Activated B cell treated with CpG ODN at 0.5 μM for 24 hours (primary cell): ENCODE measurements at regions of chr3 and their contacts with region 1.

Region 1: GRCh38 chr3:15098503-15099363 is at the start of gene RBSN:
- DNase-seq: peak; percentile 89
- ATAC-seq: peak; percentile 79
- H3K4me3 Mint-ChIP-seq: peak within 1 kb of the TSS; percentile 96
- H3K27ac Mint-ChIP-seq: peak within 1 kb of the TSS; percentile 89
- H3K4me1 Mint-ChIP-seq: peaks cover 27% of the 10 kb centered on the region
- H3K27me3 Mint-ChIP-seq: peaks cover 7% of the 10 kb centered on the region
- CTCF ChIP-seq: no peak
- total RNA-seq, gene RBSN: 19.8 and 29.0 TPM in 2 replicates

Region 2: DNA sequence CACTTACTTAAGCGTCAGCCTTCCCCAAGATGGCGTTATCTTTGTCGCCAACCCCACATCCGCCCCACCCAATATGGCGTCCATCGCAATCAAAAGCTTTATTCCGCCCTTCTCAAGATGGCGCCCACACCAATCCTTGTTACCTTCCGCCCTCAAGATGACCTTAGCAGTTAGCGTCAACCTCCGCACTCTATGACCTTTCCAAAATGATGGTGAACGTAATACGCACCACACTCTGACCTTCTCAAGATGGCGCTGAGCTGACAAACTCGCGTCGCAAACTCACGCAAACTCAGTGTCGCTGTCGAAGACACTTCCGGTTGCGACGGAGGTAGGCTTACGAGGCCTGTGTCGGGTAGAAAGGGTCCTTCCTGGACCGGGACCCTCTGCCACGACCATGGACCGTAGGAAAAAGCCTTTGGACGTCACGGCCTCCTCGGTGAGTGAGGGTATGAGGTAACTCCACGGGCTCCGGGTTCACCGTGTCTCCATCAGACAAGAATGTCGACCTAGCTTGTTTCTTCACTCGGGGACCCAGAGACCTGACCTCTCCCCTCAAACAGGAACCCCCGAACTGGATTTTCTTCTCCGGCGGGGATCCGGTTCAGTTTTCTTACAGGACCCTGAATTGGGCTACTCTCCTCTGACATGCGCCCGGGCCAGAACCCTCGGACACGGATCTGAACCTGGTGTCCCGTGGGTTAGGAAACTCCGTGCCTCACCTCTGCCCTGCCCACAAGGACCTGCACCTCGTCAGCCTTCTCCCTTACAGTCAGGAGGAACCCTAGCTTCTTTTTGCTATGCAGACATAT is 447.1 kb before region 1 on chr3 and contains the start of gene CCDC174:
- CTCF ChIA-PET with region 1: no interaction called
- POLR2A ChIA-PET with region 1: interaction called, 6 read pairs
- intact Hi-C with region 1: loop called (anchors 1 kb)
- DNase-seq: peak; percentile 86
- ATAC-seq: peak; percentile 97
- H3K4me3 Mint-ChIP-seq: peak within 1 kb of the TSS; percentile 95
- H3K27ac Mint-ChIP-seq: peak within 1 kb of the TSS; percentile 93
- H3K4me1 Mint-ChIP-seq: peaks cover 34% of the 10 kb centered on the region
- H3K27me3 Mint-ChIP-seq: no peaks in the 10 kb centered on the region
- CTCF ChIP-seq: no peak
- total RNA-seq, gene CCDC174: 30.2 and 32.4 TPM in 2 replicates

Region 3: GRCh38 chr3:15051531-15051930 is 47.2 kb before region 1 on chr3:
- CTCF ChIA-PET with region 1: no interaction called
- POLR2A ChIA-PET with region 1: interaction called, 19 read pairs
- intact Hi-C with region 1: loop called (anchors 1 kb)
- DNase-seq: no peak
- ATAC-seq: peak; percentile 20
- H3K4me3 Mint-ChIP-seq: no peak overlapping the region
- H3K27ac Mint-ChIP-seq: peak overlapping the region; percentile 84
- H3K4me1 Mint-ChIP-seq: peaks cover 68% of the 10 kb centered on the region
- H3K27me3 Mint-ChIP-seq: no peaks in the 10 kb centered on the region
- CTCF ChIP-seq: no peak

Region 4: DNA sequence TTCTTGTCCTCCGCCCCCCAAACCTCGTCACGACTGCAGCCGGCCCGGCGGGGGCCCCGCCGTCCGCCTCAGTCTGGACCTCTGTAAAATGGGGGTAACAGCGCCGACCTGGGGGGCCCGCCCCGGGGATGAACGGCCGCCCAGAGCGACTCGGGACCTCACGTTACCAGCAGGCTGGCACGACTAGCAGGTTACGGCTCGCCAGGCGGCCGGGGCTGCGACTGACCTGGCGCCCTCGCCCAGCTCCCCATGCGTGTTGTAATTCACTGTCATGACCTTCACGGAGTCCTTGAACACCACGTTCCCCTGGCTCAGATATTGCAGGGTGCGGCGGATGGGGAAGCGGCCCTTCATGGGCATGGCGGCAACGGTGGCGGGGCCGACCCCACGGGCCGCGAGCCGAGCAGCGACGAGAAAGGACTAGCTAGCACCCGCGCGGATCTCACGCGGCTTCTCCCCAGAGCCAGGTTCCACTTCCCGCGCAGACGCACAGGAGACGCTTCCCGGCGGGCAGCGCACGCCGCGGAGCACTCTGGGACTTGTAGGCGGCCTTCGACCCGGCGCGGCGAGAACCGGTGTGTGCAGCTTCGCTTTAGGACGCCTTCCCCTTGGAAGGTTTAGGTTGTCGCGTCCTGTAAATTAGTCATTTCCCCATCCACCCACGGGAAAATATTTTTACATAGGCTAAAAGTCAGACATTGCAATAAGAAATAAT is 33.7 kb before region 1 on chr3 and contains the start of gene MRPS25:
- CTCF ChIA-PET with region 1: no interaction called
- POLR2A ChIA-PET with region 1: interaction called, 51 read pairs
- intact Hi-C with region 1: loop called (anchors 1 kb)
- DNase-seq: peak; percentile 84
- ATAC-seq: peak; percentile 97
- H3K4me3 Mint-ChIP-seq: peak within 1 kb of the TSS; percentile 98
- H3K27ac Mint-ChIP-seq: peak within 1 kb of the TSS; percentile 95
- H3K4me1 Mint-ChIP-seq: peaks cover 25% of the 10 kb centered on the region
- H3K27me3 Mint-ChIP-seq: no peaks in the 10 kb centered on the region
- CTCF ChIP-seq: no peak
- total RNA-seq, gene MRPS25: 72.4 and 85.9 TPM in 2 replicates

Region 5: DNA sequence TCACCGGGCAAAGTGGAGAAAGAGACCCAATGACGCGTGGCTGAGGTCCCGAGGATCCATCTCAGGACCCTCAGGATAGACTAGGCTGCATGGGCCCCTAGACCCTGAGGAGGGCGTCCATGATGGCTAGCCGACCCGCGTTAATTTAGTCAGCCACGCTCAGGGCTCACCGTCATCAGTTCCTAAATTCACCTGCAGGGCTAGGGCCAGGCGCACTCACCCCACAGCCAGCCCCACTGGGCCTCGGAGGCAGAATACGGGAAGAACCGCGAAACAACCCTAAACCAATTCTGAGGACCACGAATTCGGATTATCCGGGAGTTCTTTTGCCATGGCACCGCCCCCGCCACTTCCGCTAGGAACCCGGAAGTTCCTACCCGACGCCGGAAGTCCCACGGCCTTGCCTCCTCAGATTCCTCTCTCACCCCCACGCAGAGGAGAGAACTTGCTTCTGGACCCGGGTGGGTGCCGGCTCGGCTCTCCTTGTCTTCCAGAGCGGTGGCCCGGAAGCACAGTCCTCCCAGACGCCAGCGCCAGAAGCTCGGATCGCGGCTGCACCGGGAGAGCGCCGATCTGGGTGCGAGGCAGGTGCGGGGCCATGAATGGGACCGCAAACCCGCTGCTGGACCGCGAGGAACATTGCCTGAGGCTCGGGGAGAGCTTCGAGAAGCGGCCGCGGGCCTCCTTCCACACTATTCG is 328.6 kb after region 1 on chr3 and contains the starts of genes EAF1 and METTL6:
- CTCF ChIA-PET with region 1: no interaction called
- POLR2A ChIA-PET with region 1: no interaction called
- intact Hi-C with region 1: loop called (anchors 2 kb)
- DNase-seq: peak; percentile 76
- ATAC-seq: peak; percentile 92
- H3K4me3 Mint-ChIP-seq: peak within 1 kb of the TSS; percentile 96
- H3K27ac Mint-ChIP-seq: peak within 1 kb of the TSS; percentile 95
- H3K4me1 Mint-ChIP-seq: peaks cover 50% of the 10 kb centered on the region
- H3K27me3 Mint-ChIP-seq: no peaks in the 10 kb centered on the region
- CTCF ChIP-seq: no peak
- total RNA-seq, gene EAF1: 19.2 and 19.7 TPM in 2 replicates
- total RNA-seq, gene METTL6: 18.7 and 20.2 TPM in 2 replicates

Region 6: GRCh38 chr3:15722877-15723620 is 624.3 kb after region 1 on chr3:
- CTCF ChIA-PET with region 1: no interaction called
- POLR2A ChIA-PET with region 1: no interaction called
- intact Hi-C with region 1: no loop called
- DNase-seq: no peak
- ATAC-seq: no peak
- H3K4me3 Mint-ChIP-seq: no peak overlapping the region
- H3K27ac Mint-ChIP-seq: no peak overlapping the region
- H3K4me1 Mint-ChIP-seq: no peaks in the 10 kb centered on the region
- H3K27me3 Mint-ChIP-seq: no peaks in the 10 kb centered on the region
- CTCF ChIP-seq: no peak

Region 7: DNA sequence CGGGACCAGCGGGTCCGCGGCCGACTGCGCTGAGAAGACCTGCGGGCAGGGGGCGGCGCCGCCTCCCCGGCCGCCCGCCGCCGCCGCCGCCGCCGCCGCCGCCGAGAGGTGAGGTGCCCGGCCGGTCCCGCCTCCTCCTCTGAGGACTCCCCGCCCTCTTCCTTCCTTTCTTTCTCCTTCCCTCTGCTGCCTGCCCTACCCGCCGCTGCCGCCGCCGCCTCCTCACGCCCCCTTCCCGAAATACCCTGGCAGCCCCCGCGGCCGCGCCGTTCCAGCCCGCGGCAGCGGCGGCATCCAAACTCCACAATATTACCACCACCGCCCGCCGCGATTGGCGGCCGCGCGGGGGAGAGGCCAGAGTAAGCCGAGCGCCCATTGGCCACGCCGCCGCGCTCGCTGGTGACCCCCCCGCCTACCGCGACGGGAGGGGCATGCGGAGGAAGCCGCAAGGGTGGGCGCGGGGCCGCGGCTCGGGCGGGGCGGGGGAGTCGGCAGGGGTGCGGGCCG is 760.8 kb after region 1 on chr3:
- CTCF ChIA-PET with region 1: no interaction called
- POLR2A ChIA-PET with region 1: interaction called, 4 read pairs
- intact Hi-C with region 1: loop called (anchors 1 kb)
- DNase-seq: peak; percentile 77
- ATAC-seq: peak; percentile 77
- H3K4me3 Mint-ChIP-seq: peak overlapping the region; percentile 99
- H3K27ac Mint-ChIP-seq: peak overlapping the region; percentile 95
- H3K4me1 Mint-ChIP-seq: peaks cover 27% of the 10 kb centered on the region
- H3K27me3 Mint-ChIP-seq: no peaks in the 10 kb centered on the region
- CTCF ChIP-seq: no peak